Mammary epithelial cell (primary cell): ENCODE measurements at regions of chr15 and their contacts with region 1.

Region 1: DNA sequence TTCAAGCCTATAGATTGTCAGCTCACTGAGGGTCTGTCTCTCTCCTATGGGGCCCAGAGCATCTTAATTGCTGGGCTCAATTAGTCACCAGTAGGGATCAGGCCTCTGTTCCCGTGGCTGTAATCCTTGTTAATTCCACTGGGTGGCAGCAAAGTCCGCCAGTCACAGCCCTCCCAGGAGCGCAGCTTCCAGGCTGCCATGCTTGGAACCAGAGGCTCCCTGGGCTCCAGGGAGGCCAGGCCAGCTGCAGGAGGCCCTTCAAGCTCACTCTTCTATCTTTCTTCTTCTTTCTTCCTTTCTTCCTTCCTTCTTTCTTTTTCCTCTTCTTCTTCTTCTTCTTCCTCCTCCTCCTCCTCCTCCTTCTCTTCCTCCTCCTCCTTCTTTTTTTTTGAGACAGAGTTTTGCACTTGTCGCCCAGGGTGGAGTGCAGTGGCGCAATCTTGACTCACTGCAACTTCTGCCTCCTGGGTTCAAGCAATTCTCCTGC is 14.4 kb downstream of the RNU5B-1 start:
- DNase-seq: peak; percentile 67
- H3K4me3 ChIP-seq: no peak overlapping the region
- H3K27ac ChIP-seq: no peak overlapping the region
- H3K4me1 ChIP-seq: no peaks in the 10 kb centered on the region
- H3K27me3 ChIP-seq: peaks cover 3% of the 10 kb centered on the region
- CTCF ChIP-seq: peak; percentile 76 to 83

Region 2: GRCh38 chr15:65384895-65385858 is 66.3 kb after region 1 on chr15:
- CTCF ChIA-PET with region 1: interaction called, 5 read pairs
- dilution Hi-C with region 1: loop called (anchors 5 kb)
- in situ Hi-C with region 1: loop called (anchors 5 kb)
- intact Hi-C with region 1: loop called (anchors 1 kb)
- DNase-seq: peak; percentile 73
- H3K4me3 ChIP-seq: peak overlapping the region in 2 of 3 experiments; percentile 22 to 30
- H3K27ac ChIP-seq: no peak overlapping the region
- H3K4me1 ChIP-seq: peaks cover 11% of the 10 kb centered on the region
- H3K27me3 ChIP-seq: peaks cover 4% of the 10 kb centered on the region
- CTCF ChIP-seq: peak; percentile 83 to 93

Region 3: GRCh38 chr15:65392368-65392767 is 73.5 kb after region 1 on chr15:
- CTCF ChIA-PET with region 1: no interaction called
- dilution Hi-C with region 1: loop called (anchors 5 kb)
- in situ Hi-C with region 1: no loop called
- intact Hi-C with region 1: no loop called
- DNase-seq: no peak
- H3K4me3 ChIP-seq: no peak overlapping the region
- H3K27ac ChIP-seq: no peak overlapping the region
- H3K4me1 ChIP-seq: no peaks in the 10 kb centered on the region
- H3K27me3 ChIP-seq: peaks cover 21% of the 10 kb centered on the region
- CTCF ChIP-seq: no peak

Region 4: DNA sequence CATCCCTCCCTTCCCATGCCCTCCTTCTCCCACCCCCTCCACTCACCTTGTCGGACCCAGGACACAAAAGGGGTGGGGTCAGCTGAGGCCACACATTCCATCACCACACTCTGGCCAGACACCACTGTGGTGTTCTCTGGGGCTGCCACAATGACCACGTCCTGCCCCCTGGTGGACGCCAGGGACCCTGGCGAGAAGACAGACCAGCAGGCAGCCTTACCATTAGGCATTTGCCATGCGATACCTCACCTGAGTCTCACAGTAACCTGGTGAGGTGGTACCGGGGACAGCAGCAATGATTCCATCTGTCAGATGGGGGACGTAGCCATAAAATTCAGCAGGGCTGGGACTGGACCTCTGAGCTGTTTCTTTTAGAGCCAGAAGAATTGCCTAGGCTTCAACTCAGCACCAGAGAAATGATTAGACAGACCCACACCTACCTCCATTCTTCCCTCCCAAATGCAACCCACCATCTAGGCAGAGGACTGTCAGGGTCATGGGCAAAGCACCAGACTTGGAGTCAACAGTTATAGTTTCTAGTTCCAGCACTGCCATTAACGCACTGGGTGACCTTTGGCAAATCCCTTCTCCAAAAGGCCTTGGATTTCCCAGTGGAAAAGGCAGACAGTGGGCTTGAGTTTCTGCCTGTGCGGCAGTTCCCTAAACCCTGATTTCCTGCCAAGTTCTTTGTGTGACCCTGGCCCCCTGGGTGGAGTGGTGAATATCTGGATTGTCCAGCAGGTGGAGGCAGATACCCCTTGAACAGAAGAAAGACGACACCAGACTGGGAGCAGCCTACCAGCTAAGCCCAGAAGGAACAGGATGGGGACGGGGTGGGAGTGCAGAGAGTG is 82.1 kb after region 1 on chr15:
- CTCF ChIA-PET with region 1: no interaction called
- dilution Hi-C with region 1: no loop called
- in situ Hi-C with region 1: no loop called
- intact Hi-C with region 1: loop called (anchors 1 kb)
- DNase-seq: peak; percentile 46
- H3K4me3 ChIP-seq: no peak overlapping the region
- H3K27ac ChIP-seq: no peak overlapping the region
- H3K4me1 ChIP-seq: no peaks in the 10 kb centered on the region
- H3K27me3 ChIP-seq: peaks cover 13% of the 10 kb centered on the region
- CTCF ChIP-seq: peak; percentile 91 to 95

Region 5: GRCh38 chr15:65532738-65533051 is 213.8 kb after region 1 on chr15:
- CTCF ChIA-PET with region 1: no interaction called
- dilution Hi-C with region 1: no loop called
- in situ Hi-C with region 1: no loop called
- intact Hi-C with region 1: no loop called
- DNase-seq: peak; percentile 50
- H3K4me3 ChIP-seq: no peak overlapping the region
- H3K27ac ChIP-seq: no peak overlapping the region
- H3K4me1 ChIP-seq: peaks cover 20% of the 10 kb centered on the region
- H3K27me3 ChIP-seq: no peaks in the 10 kb centered on the region
- CTCF ChIP-seq: no peak